ENCODE measurements at regions of chr19 and their contacts with region 1.

Region 1: GRCh38 chr19:21082011-21082975 is at the start of gene ZNF714:
- DNase-seq: peak; percentile 86
- H3K4me3 Mint-ChIP-seq: peak within 1 kb of the TSS; percentile 99
- H3K27ac Mint-ChIP-seq: peak within 1 kb of the TSS; percentile 98
- H3K4me1 Mint-ChIP-seq: peaks cover 31% of the 10 kb centered on the region
- H3K27me3 Mint-ChIP-seq: no peaks in the 10 kb centered on the region
- total RNA-seq, gene ZNF714: 18.5 and 19.5 TPM in 2 replicates

Region 2: GRCh38 chr19:19900729-19901444 is 1181.4 kb before region 1 on chr19 and contains the start of gene ZNF93:
- intact Hi-C with region 1: loop called (anchors 5 kb)
- DNase-seq: peak; percentile 85
- H3K4me3 Mint-ChIP-seq: peak within 1 kb of the TSS; percentile 95
- H3K27ac Mint-ChIP-seq: peak within 1 kb of the TSS; percentile 90
- H3K4me1 Mint-ChIP-seq: peaks cover 16% of the 10 kb centered on the region
- H3K27me3 Mint-ChIP-seq: no peaks in the 10 kb centered on the region
- total RNA-seq, gene ZNF93: 6.8 and 7.2 TPM in 2 replicates

Region 3: GRCh38 chr19:20565321-20566018 is 516.8 kb before region 1 on chr19 and contains the start of gene ZNF737:
- intact Hi-C with region 1: loop called (anchors 5 kb)
- DNase-seq: peak; percentile 81
- H3K4me3 Mint-ChIP-seq: peak within 1 kb of the TSS; percentile 97
- H3K27ac Mint-ChIP-seq: peak within 1 kb of the TSS; percentile 94
- H3K4me1 Mint-ChIP-seq: peaks cover 13% of the 10 kb centered on the region
- H3K27me3 Mint-ChIP-seq: no peaks in the 10 kb centered on the region
- total RNA-seq, gene ZNF737: 4.6 and 5.5 TPM in 2 replicates

Region 4: GRCh38 chr19:21020298-21021227 is 61.7 kb before region 1 on chr19 and contains the start of gene ZNF430:
- intact Hi-C with region 1: loop called (anchors 1 kb)
- DNase-seq: peak; percentile 93
- H3K4me3 Mint-ChIP-seq: peak within 1 kb of the TSS; percentile 99
- H3K27ac Mint-ChIP-seq: peak within 1 kb of the TSS; percentile 98
- H3K4me1 Mint-ChIP-seq: peaks cover 26% of the 10 kb centered on the region
- H3K27me3 Mint-ChIP-seq: peaks cover 2% of the 10 kb centered on the region
- total RNA-seq, gene ZNF430: 20.3 and 21.5 TPM in 2 replicates

Region 5: GRCh38 chr19:21130097-21130775 is 47.9 kb after region 1 on chr19:
- intact Hi-C with region 1: no loop called
- DNase-seq: no peak
- H3K4me3 Mint-ChIP-seq: no peak overlapping the region
- H3K27ac Mint-ChIP-seq: no peak overlapping the region
- H3K4me1 Mint-ChIP-seq: no peaks in the 10 kb centered on the region
- H3K27me3 Mint-ChIP-seq: no peaks in the 10 kb centered on the region

Region 6: GRCh38 chr19:21328885-21329605 is 246.8 kb after region 1 on chr19 and contains the start of gene ZNF708:
- intact Hi-C with region 1: loop called (anchors 2 kb)
- DNase-seq: peak; percentile 78
- H3K4me3 Mint-ChIP-seq: peak within 1 kb of the TSS; percentile 96
- H3K27ac Mint-ChIP-seq: peak within 1 kb of the TSS; percentile 98
- H3K4me1 Mint-ChIP-seq: peaks cover 13% of the 10 kb centered on the region
- H3K27me3 Mint-ChIP-seq: no peaks in the 10 kb centered on the region
- total RNA-seq, gene ZNF708: 9.6 and 9.9 TPM in 2 replicates

Region 7: DNA sequence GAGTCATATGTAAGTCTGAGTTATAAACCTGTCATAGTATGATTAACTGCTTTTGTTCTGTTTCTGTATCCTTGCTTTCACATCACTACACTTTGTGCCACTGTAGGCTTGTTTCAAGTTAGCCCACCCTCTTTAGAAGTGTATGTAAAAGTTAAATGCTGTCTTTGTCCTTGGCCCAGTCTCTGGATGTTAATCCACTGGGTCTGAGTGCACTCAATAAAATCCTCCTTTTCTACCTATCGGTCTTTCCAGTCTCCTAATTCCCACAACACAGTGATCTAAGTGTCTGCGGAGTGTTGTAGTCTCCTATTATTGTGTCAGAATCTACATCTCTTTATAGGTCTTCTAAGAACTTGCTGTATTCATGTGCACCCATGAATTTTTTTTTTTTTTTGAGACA is 437.2 kb after region 1 on chr19:
- intact Hi-C with region 1: no loop called
- DNase-seq: no peak
- H3K4me3 Mint-ChIP-seq: no peak overlapping the region
- H3K27ac Mint-ChIP-seq: no peak overlapping the region
- H3K4me1 Mint-ChIP-seq: no peaks in the 10 kb centered on the region
- H3K27me3 Mint-ChIP-seq: no peaks in the 10 kb centered on the region

Measured in activated T-helper 1 cell treated with anti-CD3 and anti-CD28 coated beads, Interleukin-12 subunit alpha, Interleukin-12 subunit beta, Interleukin-2, Interleukin-4 antibody, amounts not matched to agents 30 ng/mL and 10 ng/mL and 1 ng/mL, durations not matched to agents 14 hours and 24 hours and 36 hours (primary cell).